Heart left ventricle (tissue), 16 donors: ENCODE measurements at regions of chr7 and their contacts with region 1.

Region 1: GRCh38 chr7:90298145-90299038 is 22.7 kb downstream of the FAM237B start:
- DNase-seq: no peak
- ATAC-seq: peak in 3 of 4 donors; percentile 55 to 77 (median 75)
- H3K4me3 ChIP-seq: no peak overlapping the region
- H3K27ac ChIP-seq: no peak overlapping the region
- H3K4me1 ChIP-seq: peaks cover 0 to 4% (median 0%) of the 10 kb centered on the region in 12 donors
- H3K27me3 ChIP-seq: no peaks in the 10 kb centered on the region
- CTCF ChIP-seq: peak; percentile 8 to 63 (median 38)
- POLR2A ChIP-seq: no peak

Region 2: DNA sequence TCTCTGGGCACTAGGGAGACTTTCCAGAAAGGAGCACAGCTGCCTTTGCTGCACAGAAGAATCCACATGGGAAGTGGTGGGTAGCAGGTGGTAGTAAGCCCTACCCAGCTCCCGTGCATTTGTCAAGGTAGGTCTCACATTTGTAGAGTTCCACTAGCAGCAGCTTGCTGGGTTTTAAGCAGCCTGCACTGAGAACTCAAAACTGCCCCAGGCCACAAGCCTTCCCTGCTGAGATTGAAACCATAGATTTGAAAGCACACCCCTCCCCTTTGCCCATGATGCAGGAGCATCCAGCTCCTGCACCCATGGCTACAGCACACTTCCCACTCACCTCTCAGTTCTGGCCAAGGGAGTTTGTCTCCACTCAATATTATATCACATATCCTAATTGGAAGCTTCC is 748.6 kb before region 1 on chr7:
- intact Hi-C with region 1: no loop called
- DNase-seq: peak in 1 of 5 donors; percentile 10
- ATAC-seq: no peak
- H3K4me3 ChIP-seq: no peak overlapping the region
- H3K27ac ChIP-seq: no peak overlapping the region
- H3K4me1 ChIP-seq: no peaks in the 10 kb centered on the region
- H3K27me3 ChIP-seq: no peaks in the 10 kb centered on the region
- CTCF ChIP-seq: no peak
- POLR2A ChIP-seq: no peak

Region 3: GRCh38 chr7:89771003-89771636 is 527.3 kb before region 1 on chr7:
- intact Hi-C with region 1: no loop called
- DNase-seq: no peak
- ATAC-seq: no peak
- H3K4me3 ChIP-seq: no peak overlapping the region
- H3K27ac ChIP-seq: no peak overlapping the region
- H3K4me1 ChIP-seq: no peaks in the 10 kb centered on the region
- H3K27me3 ChIP-seq: no peaks in the 10 kb centered on the region
- CTCF ChIP-seq: peak in 2 of 12 donors; percentile 19 to 29
- POLR2A ChIP-seq: no peak

Region 4: GRCh38 chr7:90178679-90179278 is 119.6 kb before region 1 on chr7:
- intact Hi-C with region 1: loop called in 1 of 10 experiments (anchors 10 kb)
- DNase-seq: no peak
- ATAC-seq: no peak
- H3K4me3 ChIP-seq: no peak overlapping the region
- H3K27ac ChIP-seq: no peak overlapping the region
- H3K4me1 ChIP-seq: no peaks in the 10 kb centered on the region
- H3K27me3 ChIP-seq: no peaks in the 10 kb centered on the region
- CTCF ChIP-seq: no peak
- POLR2A ChIP-seq: no peak

Region 5: GRCh38 chr7:90192872-90193750 is 105.3 kb before region 1 on chr7:
- intact Hi-C with region 1: no loop called
- DNase-seq: no peak
- ATAC-seq: no peak
- H3K4me3 ChIP-seq: no peak overlapping the region
- H3K27ac ChIP-seq: no peak overlapping the region
- H3K4me1 ChIP-seq: no peaks in the 10 kb centered on the region
- H3K27me3 ChIP-seq: no peaks in the 10 kb centered on the region
- CTCF ChIP-seq: no peak
- POLR2A ChIP-seq: no peak

Region 6: DNA sequence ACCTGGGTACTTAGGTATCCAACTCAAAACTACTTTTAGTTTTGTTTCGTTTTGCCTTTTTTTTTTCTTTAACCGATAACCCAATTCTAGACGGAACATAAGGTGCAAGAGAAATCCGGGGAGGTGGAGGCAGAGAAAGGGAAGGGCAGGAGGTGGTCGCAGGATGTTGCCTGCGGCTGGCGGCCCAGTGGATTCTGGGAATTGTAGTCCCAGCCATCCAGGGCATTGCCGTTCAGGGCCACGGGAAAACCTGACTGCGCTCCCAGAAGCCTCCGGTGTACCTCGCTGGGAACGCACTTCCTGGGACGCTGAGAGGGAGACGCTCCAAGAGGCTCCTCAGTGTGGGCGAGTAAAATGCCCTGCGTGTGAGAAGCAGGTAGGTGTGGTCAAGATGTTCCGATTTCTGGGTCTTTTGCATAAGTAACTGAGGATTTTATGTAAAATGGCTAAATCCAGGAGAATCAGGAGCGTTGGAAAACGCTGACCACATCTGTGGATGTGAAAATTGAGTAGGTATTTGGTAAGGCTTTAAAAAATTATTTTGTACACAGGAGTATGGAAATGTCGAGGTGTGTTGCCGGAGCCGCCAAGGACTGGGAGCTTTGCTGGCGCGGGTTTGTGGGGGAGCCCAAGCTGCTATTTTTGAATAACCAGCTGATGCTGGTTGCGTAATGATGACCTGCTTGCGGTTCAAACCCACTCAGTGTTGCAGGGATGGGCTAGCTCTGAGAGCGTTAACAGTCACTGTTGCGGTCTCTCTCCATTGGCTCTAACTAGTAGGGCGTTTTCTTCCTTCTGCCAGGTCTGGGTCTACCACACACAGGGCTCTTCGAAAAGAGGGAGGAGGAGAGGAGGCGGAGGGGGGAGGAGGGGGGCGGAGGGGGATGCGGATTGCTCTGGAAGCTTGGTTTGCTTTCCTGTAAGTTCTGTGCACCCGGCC is 105.1 kb after region 1 on chr7 and contains the start of gene CLDN12:
- intact Hi-C with region 1: no loop called
- DNase-seq: peak; percentile 87 to 93 (median 89)
- ATAC-seq: peak; percentile 95 to 98 (median 96)
- H3K4me3 ChIP-seq: peak within 1 kb of the TSS; percentile 44 to 87 (median 78)
- H3K27ac ChIP-seq: peak within 1 kb of the TSS; percentile 77 to 97 (median 94)
- H3K4me1 ChIP-seq: peaks cover 0 to 36% (median 11%) of the 10 kb centered on the region in 12 donors
- H3K27me3 ChIP-seq: no peaks in the 10 kb centered on the region
- CTCF ChIP-seq: no peak
- POLR2A ChIP-seq: peak in 1 of 2 donors; percentile 69
- total RNA-seq, gene CLDN12: 20.7 to 45.2 (median 32.2) TPM